GM12878 (cell line): ENCODE measurements at regions of chr14 and their contacts with region 1.

Region 1: GRCh38 chr14:35932659-35933322 is 106.7 kb downstream of the BRMS1L start:
- DNase-seq: peak; percentile 47
- ATAC-seq: peak; percentile 76
- H3K4me3 ChIP-seq: peak overlapping the region; percentile 35; the same call in 1 of the 2 replicates
- H3K27ac ChIP-seq: peak overlapping the region; percentile 7; the same call in 1 of the 2 replicates
- H3K4me1 ChIP-seq: peaks cover 20% of the 10 kb centered on the region
- H3K27me3 ChIP-seq: no peaks in the 10 kb centered on the region
- CTCF ChIP-seq: no peak
- EP300 ChIP-seq: no peak; a peak in 1 of 4 replicates
- POLR2A ChIP-seq: no peak
- RAD21 ChIP-seq: no peak

Region 2: GRCh38 chr14:35944847-35945246 is 12.1 kb after region 1 on chr14:
- CTCF ChIA-PET with region 1: interaction called, 6 read pairs
- POLR2A ChIA-PET with region 1: interaction called, 3 read pairs
- RAD21 ChIA-PET with region 1: interaction called, 3 read pairs
- SMC1A ChIA-PET with region 1: interaction called, 12 read pairs
- in situ Hi-C with region 1: no loop called
- intact Hi-C with region 1: no loop called
- DNase-seq: no peak
- ATAC-seq: peak; percentile 73
- H3K4me3 ChIP-seq: no peak overlapping the region
- H3K27ac ChIP-seq: no peak overlapping the region
- H3K4me1 ChIP-seq: no peaks in the 10 kb centered on the region
- H3K27me3 ChIP-seq: no peaks in the 10 kb centered on the region
- CTCF ChIP-seq: peak; percentile 24 to 49 (median 36)
- EP300 ChIP-seq: no peak
- POLR2A ChIP-seq: no peak
- RAD21 ChIP-seq: peak; percentile 46